Gastrocnemius medialis (tissue), 4 donors: ENCODE measurements at regions of chr6 and their contacts with region 1.

Region 1: GRCh38 chr6:40947876-40948526 is 91.0 kb downstream of the UNC5CL start:
- DNase-seq: no peak
- ATAC-seq: no peak
- H3K4me3 ChIP-seq: no peak overlapping the region
- H3K27ac ChIP-seq: peak overlapping the region in 2 of 4 donors; percentile 72 to 85
- H3K4me1 ChIP-seq: peaks cover 25 to 33% of the 10 kb centered on the region in 2 donors
- H3K27me3 ChIP-seq: no peaks in the 10 kb centered on the region
- CTCF ChIP-seq: no peak
- POLR2A ChIP-seq: no peak

Region 2: DNA sequence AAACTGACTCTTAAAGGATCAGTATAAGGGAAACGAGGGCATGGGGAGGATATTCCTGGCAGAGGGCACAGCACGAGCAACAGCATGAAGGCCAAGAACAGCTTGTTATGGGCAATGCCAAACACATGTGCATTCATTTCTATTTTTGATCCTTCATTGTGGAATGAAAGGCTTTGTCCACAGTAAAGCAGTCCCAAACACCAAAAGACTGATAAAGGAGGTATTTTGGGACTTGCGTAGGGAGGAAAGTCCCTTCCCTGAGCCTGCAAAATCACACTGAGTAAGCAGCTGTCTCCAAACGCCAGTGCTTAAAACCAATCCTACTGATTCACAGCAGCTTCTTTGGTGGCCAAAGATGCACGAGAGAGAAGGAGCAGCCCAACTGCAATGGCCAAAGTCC is 47.2 kb before region 1 on chr6:
- in situ Hi-C with region 1: no loop called
- intact Hi-C with region 1: loop called (anchors 1 kb)
- DNase-seq: peak; percentile 61 to 62
- ATAC-seq: peak; percentile 83
- H3K4me3 ChIP-seq: no peak overlapping the region
- H3K27ac ChIP-seq: peak overlapping the region; percentile 76 to 84 (median 80)
- H3K4me1 ChIP-seq: peaks cover 20 to 33% of the 10 kb centered on the region in 2 donors
- H3K27me3 ChIP-seq: no peaks in the 10 kb centered on the region
- CTCF ChIP-seq: no peak
- POLR2A ChIP-seq: no peak

Region 3: GRCh38 chr6:41159415-41160082 is 211.5 kb after region 1 on chr6:
- in situ Hi-C with region 1: no loop called
- intact Hi-C with region 1: no loop called
- DNase-seq: no peak
- ATAC-seq: no peak
- H3K4me3 ChIP-seq: no peak overlapping the region
- H3K27ac ChIP-seq: no peak overlapping the region
- H3K4me1 ChIP-seq: no peaks in the 10 kb centered on the region
- H3K27me3 ChIP-seq: no peaks in the 10 kb centered on the region
- CTCF ChIP-seq: no peak
- POLR2A ChIP-seq: no peak